H1 (cell line): ENCODE measurements at regions of chr1 and their contacts with region 1.

Region 1: GRCh38 chr1:53485478-53486394 is 26.5 kb downstream of the DMRTB1 start:
- DNase-seq: peak; percentile 70 to 95
- H3K4me3 ChIP-seq: peak overlapping the region in 1 of 4 experiments; percentile 16; a peak in 1 of 8 replicates
- H3K27ac ChIP-seq: no peak overlapping the region
- H3K4me1 ChIP-seq: peaks cover 0 to 12% (median 3%) of the 10 kb centered on the region in 4 experiments; a peak in 5 of 7 replicates
- H3K27me3 ChIP-seq: peaks cover 0 to 3% (median 2%) of the 10 kb centered on the region in 4 experiments; a peak in 2 of 7 replicates
- CTCF ChIP-seq: peak; percentile 91 to 96 (median 95)
- EP300 ChIP-seq: no peak
- POLR2A ChIP-seq: no peak
- RAD21 ChIP-seq: peak; percentile 95 to 99

Region 2: GRCh38 chr1:53367503-53368304 is 118.0 kb before region 1 on chr1:
- CTCF ChIA-PET with region 1: no interaction called
- POLR2A ChIA-PET with region 1: no interaction called
- DNase-seq: peak in 1 of 2 experiments; percentile 37
- H3K4me3 ChIP-seq: no peak overlapping the region
- H3K27ac ChIP-seq: no peak overlapping the region
- H3K4me1 ChIP-seq: peaks cover 0 to 5% (median 0%) of the 10 kb centered on the region in 4 experiments; a peak in 1 of 7 replicates
- H3K27me3 ChIP-seq: no peaks in the 10 kb centered on the region; a peak in 3 of 7 replicates
- CTCF ChIP-seq: no peak
- EP300 ChIP-seq: no peak
- POLR2A ChIP-seq: no peak
- RAD21 ChIP-seq: no peak

Region 3: GRCh38 chr1:53413175-53414001 is 72.3 kb before region 1 on chr1:
- CTCF ChIA-PET with region 1: no interaction called
- POLR2A ChIA-PET with region 1: no interaction called
- DNase-seq: peak in 1 of 2 experiments; percentile 35
- H3K4me3 ChIP-seq: no peak overlapping the region
- H3K27ac ChIP-seq: no peak overlapping the region
- H3K4me1 ChIP-seq: peaks cover 4 to 24% (median 11%) of the 10 kb centered on the region in 4 experiments; a peak in 6 of 7 replicates
- H3K27me3 ChIP-seq: no peaks in the 10 kb centered on the region; a peak in 3 of 7 replicates
- CTCF ChIP-seq: no peak
- EP300 ChIP-seq: no peak
- POLR2A ChIP-seq: no peak
- RAD21 ChIP-seq: no peak

Region 4: DNA sequence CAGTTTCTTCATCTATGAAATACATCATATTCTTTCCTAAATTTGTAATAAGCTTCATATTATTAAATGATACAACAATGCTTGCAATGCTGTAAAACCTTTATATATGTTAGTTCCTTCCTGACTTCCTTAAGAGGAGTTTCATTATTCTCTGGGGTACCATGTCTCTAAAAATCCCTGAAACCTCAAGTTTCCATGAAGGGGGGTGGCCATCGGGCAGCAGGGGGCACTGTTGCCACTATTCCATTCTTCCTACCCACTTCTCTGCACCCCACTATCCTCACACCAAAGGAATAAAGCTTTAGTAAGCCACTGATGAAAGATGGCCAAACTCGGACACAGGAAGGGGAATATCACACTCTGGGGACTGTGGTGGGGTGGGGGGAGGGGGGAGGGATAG is 35.5 kb before region 1 on chr1:
- CTCF ChIA-PET with region 1: interaction called, 28 read pairs
- POLR2A ChIA-PET with region 1: no interaction called
- DNase-seq: peak in 1 of 2 experiments; percentile 75
- H3K4me3 ChIP-seq: no peak overlapping the region; a peak in 1 of 8 replicates
- H3K27ac ChIP-seq: no peak overlapping the region
- H3K4me1 ChIP-seq: peaks cover 3 to 24% (median 19%) of the 10 kb centered on the region in 4 experiments
- H3K27me3 ChIP-seq: no peaks in the 10 kb centered on the region; a peak in 1 of 7 replicates
- CTCF ChIP-seq: peak; percentile 59 to 67 (median 60)
- EP300 ChIP-seq: no peak
- POLR2A ChIP-seq: no peak
- RAD21 ChIP-seq: peak; percentile 32 to 51; a peak in 3 of 4 replicates

Region 5: DNA sequence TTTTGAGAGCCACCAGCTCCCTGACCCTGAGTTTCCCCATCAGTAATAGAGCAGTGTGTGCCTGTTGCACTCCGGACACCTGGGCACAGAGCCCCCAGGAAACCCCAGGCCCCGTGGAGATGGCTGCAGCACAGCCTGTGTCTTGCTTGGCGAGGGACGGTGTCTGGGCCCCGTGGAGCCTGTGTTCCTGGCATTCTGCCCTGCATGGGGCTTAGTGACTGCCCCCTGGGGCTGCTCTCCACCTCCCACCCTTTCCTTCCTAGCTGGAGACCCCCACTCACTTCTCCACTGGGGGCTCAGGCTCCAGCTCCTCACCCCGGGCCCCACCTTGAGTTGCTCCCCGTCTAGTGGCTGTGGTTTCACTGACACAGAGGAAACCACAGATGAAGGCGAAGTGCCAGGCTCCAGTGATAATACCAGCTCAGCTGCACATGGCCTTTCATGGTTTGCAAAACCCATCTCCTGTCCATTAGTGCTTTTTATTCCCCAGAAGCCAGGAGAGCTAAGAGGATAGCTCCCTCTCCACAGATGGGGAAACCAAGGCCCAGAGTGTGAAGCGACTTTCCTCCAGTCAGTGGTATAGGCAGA is 12.9 kb after region 1 on chr1:
- CTCF ChIA-PET with region 1: interaction called, 40 read pairs
- POLR2A ChIA-PET with region 1: interaction called, 3 read pairs
- DNase-seq: no peak
- H3K4me3 ChIP-seq: no peak overlapping the region
- H3K27ac ChIP-seq: no peak overlapping the region
- H3K4me1 ChIP-seq: peaks cover 0 to 15% (median 8%) of the 10 kb centered on the region in 4 experiments; a peak in 6 of 7 replicates
- H3K27me3 ChIP-seq: no peaks in the 10 kb centered on the region; a peak in 2 of 7 replicates
- CTCF ChIP-seq: no peak
- EP300 ChIP-seq: no peak
- POLR2A ChIP-seq: no peak
- RAD21 ChIP-seq: no peak

Region 6: DNA sequence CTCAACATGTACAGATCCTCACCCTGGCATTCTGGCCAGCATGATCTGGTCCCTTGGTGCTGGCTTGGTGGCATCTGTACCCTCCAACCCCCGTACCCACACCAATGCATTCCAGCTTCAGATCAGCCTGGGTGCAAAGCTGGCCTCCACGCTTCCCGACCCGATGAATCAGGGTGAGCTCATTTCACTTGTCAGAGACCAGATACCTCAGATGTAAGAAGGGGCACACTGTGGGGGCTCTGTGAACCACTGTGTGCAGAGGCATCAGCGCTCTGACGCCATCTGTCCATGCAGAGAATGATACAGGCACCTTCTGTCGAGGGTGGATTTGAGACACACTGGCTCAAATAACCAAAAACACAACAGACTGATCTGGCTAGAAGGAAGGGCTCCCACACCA is 50.1 kb after region 1 on chr1:
- CTCF ChIA-PET with region 1: interaction called, 26 read pairs
- POLR2A ChIA-PET with region 1: no interaction called
- DNase-seq: no peak
- H3K4me3 ChIP-seq: no peak overlapping the region
- H3K27ac ChIP-seq: no peak overlapping the region
- H3K4me1 ChIP-seq: no peaks in the 10 kb centered on the region; a peak in 1 of 7 replicates
- H3K27me3 ChIP-seq: no peaks in the 10 kb centered on the region; a peak in 1 of 7 replicates
- CTCF ChIP-seq: no peak
- EP300 ChIP-seq: no peak
- POLR2A ChIP-seq: no peak
- RAD21 ChIP-seq: no peak

Region 7: GRCh38 chr1:53572065-53572814 is 86.5 kb after region 1 on chr1:
- CTCF ChIA-PET with region 1: interaction called, 73 read pairs
- POLR2A ChIA-PET with region 1: no interaction called
- DNase-seq: no peak
- H3K4me3 ChIP-seq: no peak overlapping the region
- H3K27ac ChIP-seq: no peak overlapping the region
- H3K4me1 ChIP-seq: peaks cover 0 to 12% (median 6%) of the 10 kb centered on the region in 4 experiments; a peak in 5 of 7 replicates
- H3K27me3 ChIP-seq: no peaks in the 10 kb centered on the region
- CTCF ChIP-seq: no peak
- EP300 ChIP-seq: no peak
- POLR2A ChIP-seq: no peak
- RAD21 ChIP-seq: no peak

Region 8: GRCh38 chr1:53636621-53637171 is 151.0 kb after region 1 on chr1:
- CTCF ChIA-PET with region 1: interaction called, 15 read pairs
- POLR2A ChIA-PET with region 1: no interaction called
- DNase-seq: peak in 1 of 2 experiments; percentile 49
- H3K4me3 ChIP-seq: no peak overlapping the region
- H3K27ac ChIP-seq: no peak overlapping the region
- H3K4me1 ChIP-seq: peaks cover 0 to 5% (median 4%) of the 10 kb centered on the region in 4 experiments; a peak in 5 of 7 replicates
- H3K27me3 ChIP-seq: no peaks in the 10 kb centered on the region
- CTCF ChIP-seq: peak in 2 of 3 experiments; percentile 11 to 14; a peak in 1 of 4 replicates
- EP300 ChIP-seq: no peak
- POLR2A ChIP-seq: no peak
- RAD21 ChIP-seq: peak; percentile 26 to 33

Region 9: DNA sequence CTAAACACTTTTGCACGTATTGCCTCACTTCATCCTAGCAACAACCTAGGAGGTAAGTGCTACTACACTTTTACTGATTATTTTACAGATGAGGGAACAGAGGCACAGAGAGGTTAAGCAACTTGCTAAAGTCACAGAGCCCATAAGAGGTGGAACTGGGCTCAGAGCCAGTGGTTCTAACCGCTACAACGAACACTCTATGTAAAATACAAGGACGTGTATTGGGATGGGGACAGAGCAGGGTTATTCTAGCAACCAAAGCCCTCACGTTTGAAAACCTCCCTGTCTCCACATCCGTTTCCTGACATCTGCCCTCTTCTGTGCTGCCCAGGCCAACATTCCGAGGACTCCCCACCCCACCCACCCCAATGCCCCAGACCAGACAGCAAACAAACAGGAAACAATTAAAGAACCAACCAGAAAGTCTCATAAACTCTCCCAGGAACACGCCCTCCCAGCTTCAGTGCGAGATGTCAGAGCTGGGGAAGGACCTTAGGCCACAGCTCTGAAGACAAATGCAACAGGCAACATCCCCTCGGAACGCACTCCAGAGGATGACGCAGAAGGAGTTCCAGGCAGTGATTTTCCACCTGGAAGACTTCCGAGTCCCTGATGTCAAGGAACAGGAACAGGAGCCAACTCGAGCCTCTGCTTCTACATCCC is 212.1 kb after region 1 on chr1:
- CTCF ChIA-PET with region 1: interaction called, 10 read pairs
- POLR2A ChIA-PET with region 1: no interaction called
- DNase-seq: no peak
- H3K4me3 ChIP-seq: no peak overlapping the region
- H3K27ac ChIP-seq: no peak overlapping the region
- H3K4me1 ChIP-seq: peaks cover 0 to 16% (median 10%) of the 10 kb centered on the region in 4 experiments; a peak in 5 of 7 replicates
- H3K27me3 ChIP-seq: no peaks in the 10 kb centered on the region; a peak in 1 of 7 replicates
- CTCF ChIP-seq: no peak
- EP300 ChIP-seq: no peak
- POLR2A ChIP-seq: no peak
- RAD21 ChIP-seq: no peak